ENCODE measurements at regions of chr13 and their contacts with region 1.

Region 1: GRCh38 chr13:72253754-72254153 is 386.8 kb upstream of the DACH1 start:
- DNase-seq: no peak
- H3K4me3 ChIP-seq: no peak overlapping the region
- H3K27ac ChIP-seq: no peak overlapping the region
- H3K4me1 ChIP-seq: no peaks in the 10 kb centered on the region
- H3K27me3 ChIP-seq: no peaks in the 10 kb centered on the region
- CTCF ChIP-seq: no peak
- EP300 ChIP-seq: no peak
- POLR2A ChIP-seq: no peak

Region 2: GRCh38 chr13:71546881-71547280 is 706.9 kb before region 1 on chr13:
- in situ Hi-C with region 1: no loop called
- intact Hi-C with region 1: loop called (anchors 5 kb)
- DNase-seq: no peak
- H3K4me3 ChIP-seq: no peak overlapping the region
- H3K27ac ChIP-seq: no peak overlapping the region
- H3K4me1 ChIP-seq: no peaks in the 10 kb centered on the region
- H3K27me3 ChIP-seq: no peaks in the 10 kb centered on the region
- CTCF ChIP-seq: no peak
- EP300 ChIP-seq: no peak
- POLR2A ChIP-seq: no peak

Region 3: DNA sequence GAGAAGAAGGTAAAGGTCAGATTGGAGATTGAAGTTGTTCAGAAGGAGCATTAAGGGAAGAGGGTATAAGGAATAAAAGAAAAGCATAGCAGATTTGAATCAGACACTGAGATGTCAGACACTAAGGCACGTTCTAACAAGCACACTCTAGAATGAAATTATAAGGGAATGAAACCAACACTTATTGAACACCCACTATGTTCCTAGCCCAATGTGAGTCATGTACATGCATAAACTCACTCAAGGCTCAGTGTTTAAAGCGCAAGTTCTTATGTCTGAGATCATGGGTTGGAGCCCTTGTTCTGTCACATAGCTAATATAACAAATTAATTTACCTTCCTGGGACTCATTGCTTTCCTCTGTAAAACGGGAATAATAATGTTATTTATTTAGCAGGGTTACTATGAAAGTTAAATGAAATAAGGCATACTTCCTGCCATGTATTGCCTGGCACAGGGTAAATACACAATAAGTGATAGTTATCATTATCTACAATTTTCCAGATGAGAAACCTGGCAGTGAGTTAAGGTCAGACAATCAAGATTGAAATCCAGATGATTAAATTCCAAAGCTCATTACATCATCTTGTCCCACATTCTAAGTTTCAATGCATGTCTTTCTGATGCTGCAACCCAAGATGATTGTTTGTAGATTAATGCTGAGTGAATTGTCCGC is 318.5 kb before region 1 on chr13:
- in situ Hi-C with region 1: no loop called
- intact Hi-C with region 1: no loop called
- DNase-seq: no peak
- H3K4me3 ChIP-seq: no peak overlapping the region
- H3K27ac ChIP-seq: no peak overlapping the region
- H3K4me1 ChIP-seq: no peaks in the 10 kb centered on the region
- H3K27me3 ChIP-seq: no peaks in the 10 kb centered on the region
- CTCF ChIP-seq: no peak
- EP300 ChIP-seq: no peak
- POLR2A ChIP-seq: no peak

Measured in transverse colon (tissue), 4 donors.